PC-9 (cell line): ENCODE measurements at regions of chr22 and their contacts with region 1.

Region 1: GRCh38 chr22:41666661-41667258 is 21.9 kb downstream of the SNU13 start:
- DNase-seq: peak; percentile 87 to 96
- H3K4me3 ChIP-seq: peak overlapping the region; percentile 51
- H3K27ac ChIP-seq: peak overlapping the region; percentile 91
- H3K4me1 ChIP-seq: peaks cover 51% of the 10 kb centered on the region
- H3K27me3 ChIP-seq: no peaks in the 10 kb centered on the region
- CTCF ChIP-seq: peak; percentile 99

Region 2: DNA sequence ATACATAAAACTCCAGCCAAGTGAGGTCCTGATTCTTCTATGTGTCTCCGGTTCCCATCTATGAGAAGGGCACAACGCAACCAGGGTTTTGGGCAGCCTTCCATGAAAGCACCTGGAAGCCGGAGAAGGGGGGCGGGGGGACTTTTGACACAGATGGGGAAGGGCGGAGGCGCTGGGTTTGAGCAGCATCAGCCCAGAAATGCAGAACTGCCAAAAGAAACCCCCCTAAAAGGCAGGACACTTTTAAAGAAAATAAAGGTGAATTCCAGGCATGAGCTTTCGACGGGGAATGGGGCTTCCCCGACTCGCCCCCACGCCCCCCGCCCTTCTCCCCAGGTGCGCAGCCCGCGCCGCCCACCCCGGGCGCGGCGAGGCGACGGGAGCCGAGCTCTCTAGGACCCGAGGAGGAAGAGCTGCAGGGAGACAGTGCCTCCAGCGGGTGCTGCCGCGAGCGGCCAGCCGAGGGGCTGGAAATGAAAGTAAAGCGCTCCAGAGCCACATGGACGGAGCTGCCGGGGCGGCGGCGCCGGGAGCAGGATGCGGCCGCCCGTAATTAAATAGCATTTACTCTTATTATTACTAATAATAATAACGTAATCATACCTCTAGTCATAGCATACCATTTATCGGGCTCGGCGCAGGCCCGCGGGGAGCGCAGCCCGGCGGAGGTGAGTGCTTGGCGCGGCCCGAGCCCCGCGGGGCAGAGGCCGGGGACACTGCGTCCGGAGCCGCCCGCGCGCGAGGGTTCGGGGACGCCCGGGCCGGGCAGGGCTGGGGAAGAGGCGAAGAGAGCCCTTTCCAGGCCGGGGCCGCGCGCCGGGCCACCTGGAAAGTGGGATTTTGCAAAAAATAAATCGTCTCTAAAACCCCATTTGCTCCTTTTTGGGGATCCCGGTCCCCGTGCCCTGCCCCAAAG is 365.4 kb before region 1 on chr22 and contains the start of gene ZC3H7B:
- CTCF ChIA-PET with region 1: no interaction called
- POLR2A ChIA-PET with region 1: interaction called, 10 read pairs
- intact Hi-C with region 1: no loop called
- DNase-seq: peak; percentile 77 to 79
- H3K4me3 ChIP-seq: peak within 1 kb of the TSS; percentile 99
- H3K27ac ChIP-seq: peak within 1 kb of the TSS; percentile 1; the same call in 1 of the 2 replicates
- H3K4me1 ChIP-seq: peaks cover 37% of the 10 kb centered on the region
- H3K27me3 ChIP-seq: no peaks in the 10 kb centered on the region
- CTCF ChIP-seq: peak; percentile 63
- total RNA-seq, gene ZC3H7B: 54.5 and 62.7 TPM in 2 replicates

Region 3: DNA sequence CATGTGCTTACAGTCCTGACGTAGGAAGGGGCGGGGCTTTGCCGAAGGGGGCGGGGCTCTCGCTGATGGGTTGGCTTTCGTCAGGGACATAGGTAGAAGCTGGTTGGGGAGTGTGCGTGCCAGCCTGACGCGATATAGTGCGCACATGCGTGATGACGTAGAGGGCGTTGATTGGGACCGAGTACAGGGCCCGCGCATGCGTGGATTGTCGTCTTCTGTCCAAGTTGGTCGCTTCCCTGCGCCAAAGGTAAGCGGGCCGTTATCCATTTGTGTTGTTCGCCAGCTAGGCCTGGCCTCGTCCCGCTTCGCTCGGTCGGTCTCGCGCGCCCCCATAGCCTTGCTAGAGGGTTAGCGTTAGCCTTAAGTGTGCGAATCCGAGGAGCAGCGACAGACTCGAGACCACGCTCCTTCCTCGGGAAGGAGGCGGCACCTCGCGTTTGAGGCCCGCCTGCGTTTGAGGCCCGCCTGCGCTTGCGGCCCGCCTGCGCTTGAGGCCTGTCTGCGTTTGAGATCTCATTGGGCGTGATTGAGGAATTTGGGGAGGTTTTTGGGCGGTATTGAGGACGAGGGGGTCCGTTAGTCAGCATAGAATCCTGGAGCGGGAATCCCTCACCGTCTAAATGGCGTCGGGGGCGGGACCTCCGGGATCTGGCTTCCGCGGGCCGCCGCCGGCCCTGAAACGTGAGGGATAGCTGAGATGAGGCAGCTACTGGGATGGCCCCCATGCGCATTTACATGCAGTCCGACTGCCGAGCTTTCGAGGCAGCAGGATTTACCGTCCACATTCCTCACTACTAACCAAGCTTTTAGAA is 45.5 kb before region 1 on chr22 and contains the start of gene XRCC6:
- CTCF ChIA-PET with region 1: interaction called, 4 read pairs
- POLR2A ChIA-PET with region 1: interaction called, 19 read pairs
- intact Hi-C with region 1: no loop called
- DNase-seq: peak; percentile 99 to 100
- H3K4me3 ChIP-seq: peak within 1 kb of the TSS; percentile 90
- H3K27ac ChIP-seq: peak within 1 kb of the TSS; percentile 79
- H3K4me1 ChIP-seq: peaks cover 33% of the 10 kb centered on the region
- H3K27me3 ChIP-seq: no peaks in the 10 kb centered on the region
- CTCF ChIP-seq: no peak
- total RNA-seq, gene XRCC6: 386 and 486 TPM in 2 replicates

Region 4: GRCh38 chr22:41800348-41801146 is 133.8 kb after region 1 on chr22 and contains the start of gene CCDC134:
- CTCF ChIA-PET with region 1: interaction called, 8 read pairs
- POLR2A ChIA-PET with region 1: interaction called, 3 read pairs
- intact Hi-C with region 1: loop called (anchors 2 kb)
- DNase-seq: peak; percentile 78 to 96
- H3K4me3 ChIP-seq: peak within 1 kb of the TSS; percentile 71
- H3K27ac ChIP-seq: peak within 1 kb of the TSS; percentile 46
- H3K4me1 ChIP-seq: peaks cover 27% of the 10 kb centered on the region
- H3K27me3 ChIP-seq: no peaks in the 10 kb centered on the region
- CTCF ChIP-seq: no peak
- total RNA-seq, gene CCDC134: 29.0 and 33.3 TPM in 2 replicates

Region 5: DNA sequence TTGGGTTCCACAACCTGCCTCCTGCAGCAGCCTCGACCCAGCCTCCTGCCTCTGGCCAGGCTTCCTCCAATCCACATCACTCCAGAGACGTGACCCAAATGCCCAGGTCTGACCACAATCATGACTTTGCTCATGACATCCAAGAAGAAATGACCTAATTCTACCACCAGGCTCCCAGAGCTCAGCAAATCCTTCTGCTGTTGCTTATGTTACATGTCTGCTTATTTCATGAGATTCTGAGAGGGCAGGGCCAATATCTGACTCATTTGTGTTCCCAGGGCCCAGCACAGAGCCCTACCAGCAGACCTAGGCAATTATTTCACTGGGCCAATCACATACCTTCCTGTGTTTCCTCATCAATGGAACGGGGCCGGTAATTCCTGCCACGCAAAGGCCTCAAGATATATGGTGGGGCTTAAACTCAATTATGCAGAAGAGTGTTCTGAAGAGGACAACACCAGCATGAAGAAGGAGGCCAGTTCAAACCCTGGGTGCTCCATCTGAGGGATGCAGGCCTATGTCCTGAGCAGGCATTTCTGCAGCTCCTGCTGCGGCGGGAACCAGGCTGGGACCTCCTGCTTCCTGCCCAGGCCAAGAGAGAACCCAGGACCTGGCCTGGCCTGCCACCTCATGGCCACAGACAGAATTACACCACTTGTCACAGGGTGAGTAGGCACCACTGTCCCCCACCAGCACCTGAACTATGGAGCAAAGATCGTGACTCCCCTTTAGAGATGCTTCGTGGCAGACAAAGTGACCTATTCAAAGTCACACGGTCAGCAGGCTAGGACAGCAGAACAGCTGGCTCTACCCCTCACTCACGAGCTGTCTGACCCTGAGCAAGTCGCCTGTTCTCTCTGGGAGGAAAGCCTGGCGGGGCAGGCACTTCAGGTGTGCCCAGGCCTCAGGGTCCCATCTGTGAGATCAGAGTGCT is 274.3 kb after region 1 on chr22:
- CTCF ChIA-PET with region 1: interaction called, 10 read pairs
- POLR2A ChIA-PET with region 1: no interaction called
- intact Hi-C with region 1: loop called (anchors 1 kb)
- DNase-seq: peak; percentile 63 to 84
- H3K4me3 ChIP-seq: no peak overlapping the region
- H3K27ac ChIP-seq: peak overlapping the region; percentile 58
- H3K4me1 ChIP-seq: peaks cover 11% of the 10 kb centered on the region
- H3K27me3 ChIP-seq: no peaks in the 10 kb centered on the region
- CTCF ChIP-seq: peak; percentile 98

Region 6: GRCh38 chr22:41946629-41947423 is 280.1 kb after region 1 on chr22 and contains the start of gene CENPM:
- CTCF ChIA-PET with region 1: no interaction called
- POLR2A ChIA-PET with region 1: interaction called, 13 read pairs
- intact Hi-C with region 1: no loop called
- DNase-seq: peak; percentile 92 to 95
- H3K4me3 ChIP-seq: peak within 1 kb of the TSS; percentile 73
- H3K27ac ChIP-seq: no peak within 1 kb of the TSS
- H3K4me1 ChIP-seq: peaks cover 18% of the 10 kb centered on the region
- H3K27me3 ChIP-seq: no peaks in the 10 kb centered on the region
- CTCF ChIP-seq: no peak
- total RNA-seq, gene CENPM: 42.0 and 53.8 TPM in 2 replicates

Region 7: GRCh38 chr22:42614312-42615091 is 947.7 kb after region 1 on chr22 and contains the start of gene POLDIP3:
- CTCF ChIA-PET with region 1: no interaction called
- POLR2A ChIA-PET with region 1: interaction called, 11 read pairs
- intact Hi-C with region 1: no loop called
- DNase-seq: peak; percentile 93 to 97
- H3K4me3 ChIP-seq: peak within 1 kb of the TSS; percentile 100
- H3K27ac ChIP-seq: peak within 1 kb of the TSS; percentile 96
- H3K4me1 ChIP-seq: peaks cover 30% of the 10 kb centered on the region
- H3K27me3 ChIP-seq: no peaks in the 10 kb centered on the region
- CTCF ChIP-seq: no peak
- total RNA-seq, gene POLDIP3: 60.1 and 62.9 TPM in 2 replicates